ENCODE measurements at regions of chr6 and their contacts with region 1.

Region 1: DNA sequence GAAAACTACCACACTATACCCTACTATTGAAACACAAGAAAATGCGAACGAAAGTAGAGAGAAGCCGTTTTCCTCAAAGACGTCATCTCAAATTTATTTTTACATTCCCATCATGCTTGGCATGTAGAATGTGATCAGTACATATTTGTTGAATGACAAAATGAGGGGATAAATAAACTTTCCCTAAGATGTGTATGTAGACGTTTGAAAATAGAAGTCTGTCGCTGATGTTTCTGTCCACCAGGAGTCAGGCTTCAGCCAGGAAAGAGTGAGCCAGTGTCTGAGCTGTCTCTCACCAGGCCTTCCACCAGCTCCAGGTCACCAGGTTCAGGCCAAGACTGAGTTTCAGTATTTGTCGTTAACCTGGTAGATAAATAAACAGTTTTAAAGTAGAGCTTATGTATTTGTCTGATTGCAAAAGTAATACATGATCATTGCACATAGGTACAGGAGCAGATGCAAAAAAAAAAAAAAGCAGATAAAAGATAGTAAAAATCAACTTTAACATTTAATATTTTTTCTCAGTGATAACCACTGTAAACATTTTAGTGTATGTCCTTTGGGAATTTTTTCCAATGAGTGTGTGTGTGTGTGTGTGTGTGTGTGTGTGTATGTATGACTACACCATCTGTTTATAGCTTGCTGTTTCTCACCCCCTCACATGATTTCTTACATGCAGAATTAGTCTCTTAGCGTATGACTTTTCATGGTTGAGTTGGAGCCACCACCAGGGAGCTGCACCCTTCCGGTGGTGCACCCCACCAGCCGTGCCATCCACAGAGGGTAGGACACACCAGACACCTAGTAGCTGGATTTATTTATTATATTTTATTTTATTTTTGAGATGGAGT is 26.2 kb downstream of the WRNIP1 start:
- DNase-seq: peak; percentile 61
- ATAC-seq: peak; percentile 94
- H3K4me3 ChIP-seq: no peak overlapping the region
- H3K27ac ChIP-seq: peak overlapping the region; percentile 8; the same call in 1 of the 2 replicates
- H3K4me1 ChIP-seq: peaks cover 9% of the 10 kb centered on the region; the same call in 1 of the 2 replicates
- H3K27me3 ChIP-seq: no peaks in the 10 kb centered on the region
- CTCF ChIP-seq: peak; percentile 88

Region 2: DNA sequence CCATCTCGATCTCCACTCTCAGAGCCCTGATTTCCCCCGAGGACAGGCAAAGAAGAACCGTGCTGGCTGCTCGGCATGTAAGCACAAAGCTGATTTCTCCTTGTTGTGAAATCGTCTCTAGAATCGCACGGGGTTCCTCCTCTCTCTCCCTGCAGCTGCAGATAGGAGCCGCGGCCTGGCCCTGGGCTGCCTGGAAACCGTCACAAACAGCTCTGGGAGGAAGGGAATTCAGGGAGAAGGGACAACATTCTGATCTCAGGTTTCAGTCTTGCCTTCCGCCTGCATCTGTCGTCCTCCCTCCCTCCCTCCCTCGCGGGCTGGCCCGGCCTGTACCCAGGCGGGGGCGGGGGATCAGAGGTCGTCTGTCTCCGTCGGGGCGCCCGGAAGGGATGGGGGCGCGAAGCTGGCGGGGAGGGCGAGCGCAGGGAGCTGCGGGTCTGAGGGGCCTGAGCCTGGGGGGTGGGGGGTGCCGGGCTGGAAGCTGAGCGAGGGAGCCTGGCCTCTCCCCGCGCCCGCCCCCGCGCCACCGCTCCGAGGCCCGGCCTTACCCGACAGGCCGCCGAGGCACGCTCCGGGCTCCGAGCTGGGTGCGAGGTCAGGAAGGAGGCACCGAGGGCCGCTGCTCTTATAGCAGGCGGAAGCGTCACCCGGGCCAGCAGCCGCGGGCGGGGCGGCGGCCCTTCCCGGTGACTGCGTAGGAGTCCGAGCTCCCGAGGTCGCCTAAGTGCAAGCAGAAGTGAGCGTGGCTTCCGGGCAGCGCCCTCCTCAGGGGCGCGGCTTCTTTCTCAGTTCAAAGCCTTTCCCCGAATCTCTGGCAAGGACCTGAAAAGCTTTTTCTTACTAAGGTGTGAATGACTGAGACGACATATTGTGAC is 50.2 kb after region 1 on chr6 and contains the start of gene SERPINB1:
- CTCF ChIA-PET with region 1: interaction called, 11 read pairs
- POLR2A ChIA-PET with region 1: interaction called, 6 read pairs
- in situ Hi-C with region 1: no loop called
- intact Hi-C with region 1: loop called (anchors 2 kb)
- DNase-seq: no peak
- ATAC-seq: peak; percentile 83
- H3K4me3 ChIP-seq: peak within 1 kb of the TSS; percentile 49 to 75
- H3K27ac ChIP-seq: peak within 1 kb of the TSS; percentile 87
- H3K4me1 ChIP-seq: peaks cover 51% of the 10 kb centered on the region
- H3K27me3 ChIP-seq: no peaks in the 10 kb centered on the region
- CTCF ChIP-seq: no peak
- total RNA-seq, gene SERPINB1: 40.8 TPM

Region 3: GRCh38 chr6:2846873-2847224 is 55.5 kb after region 1 on chr6:
- CTCF ChIA-PET with region 1: interaction called, 11 read pairs
- POLR2A ChIA-PET with region 1: no interaction called
- in situ Hi-C with region 1: no loop called
- intact Hi-C with region 1: no loop called
- DNase-seq: no peak
- ATAC-seq: no peak
- H3K4me3 ChIP-seq: peak overlapping the region in 1 of 2 experiments; percentile 44; a peak in 2 of 4 replicates
- H3K27ac ChIP-seq: peak overlapping the region; percentile 64
- H3K4me1 ChIP-seq: peaks cover 31% of the 10 kb centered on the region
- H3K27me3 ChIP-seq: no peaks in the 10 kb centered on the region
- CTCF ChIP-seq: no peak

Region 4: DNA sequence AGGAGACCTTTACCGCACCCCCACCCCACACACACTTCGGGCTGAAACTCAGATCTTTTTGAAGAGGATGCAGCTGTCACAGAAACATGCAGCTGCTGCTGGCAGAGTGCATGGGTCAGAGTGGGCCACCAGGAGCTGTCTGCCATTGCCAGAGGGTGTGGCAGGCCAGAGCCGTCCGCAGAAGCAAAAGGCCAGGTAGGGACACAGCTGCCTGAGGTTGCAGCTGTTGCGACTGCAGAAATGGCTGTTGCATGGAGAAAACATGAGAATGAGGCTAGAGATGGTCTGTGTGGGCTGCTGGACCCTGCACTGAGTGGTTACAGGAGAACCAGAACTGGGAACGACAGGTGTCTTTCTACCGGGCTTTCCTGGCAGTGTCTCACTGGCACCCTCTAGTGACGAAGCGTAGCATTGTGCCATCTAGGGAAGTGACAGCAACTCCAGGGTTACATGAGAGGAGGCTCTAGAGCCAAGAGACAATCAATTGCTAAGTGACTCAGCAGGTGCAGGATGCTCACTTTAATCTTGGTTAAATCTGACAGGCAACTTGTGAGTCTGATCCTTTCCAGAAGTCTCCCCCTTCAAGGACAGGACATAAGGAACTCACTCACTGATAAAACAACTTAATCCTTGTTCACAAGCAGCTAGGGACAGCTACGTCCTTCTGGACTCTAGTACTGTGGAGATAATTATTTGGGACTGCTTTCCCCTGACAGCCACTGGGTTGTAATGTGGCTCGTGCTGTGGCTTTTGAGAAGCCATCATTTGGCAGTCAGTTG is 140.8 kb after region 1 on chr6:
- CTCF ChIA-PET with region 1: interaction called, 4 read pairs
- POLR2A ChIA-PET with region 1: no interaction called
- in situ Hi-C with region 1: no loop called
- intact Hi-C with region 1: loop called (anchors 1 kb)
- DNase-seq: peak; percentile 74
- ATAC-seq: peak; percentile 99
- H3K4me3 ChIP-seq: no peak overlapping the region
- H3K27ac ChIP-seq: no peak overlapping the region
- H3K4me1 ChIP-seq: no peaks in the 10 kb centered on the region
- H3K27me3 ChIP-seq: peaks cover 3% of the 10 kb centered on the region; the same call in 1 of the 2 replicates
- CTCF ChIP-seq: peak; percentile 99